Dendritic cell treated with granulocyte-macrophage colony-stimulating factor and Interleukin-4, amounts not matched to agents 40 ng/mL and 50 ng/mL, for 4 days (primary cell): ENCODE measurements at regions of chr19 and their contacts with region 1.

Region 1: GRCh38 chr19:572140-572742 is at the start of gene BSG:
- H3K4me3 Mint-ChIP-seq: peak within 1 kb of the TSS; percentile 90
- H3K27ac Mint-ChIP-seq: peak within 1 kb of the TSS; percentile 95
- H3K4me1 Mint-ChIP-seq: peaks cover 61% of the 10 kb centered on the region
- H3K27me3 Mint-ChIP-seq: no peaks in the 10 kb centered on the region

Region 2: GRCh38 chr19:531009-531752 is 41.1 kb before region 1 on chr19:
- intact Hi-C with region 1: loop called (anchors 5 kb)
- H3K4me3 Mint-ChIP-seq: peak overlapping the region; percentile 92
- H3K27ac Mint-ChIP-seq: peak overlapping the region; percentile 82
- H3K4me1 Mint-ChIP-seq: peaks cover 46% of the 10 kb centered on the region
- H3K27me3 Mint-ChIP-seq: peaks cover 12% of the 10 kb centered on the region

Region 3: GRCh38 chr19:556611-557382 is 15.4 kb before region 1 on chr19:
- intact Hi-C with region 1: loop called (anchors 2 kb)
- H3K4me3 Mint-ChIP-seq: peak overlapping the region; percentile 61
- H3K27ac Mint-ChIP-seq: peak overlapping the region; percentile 87
- H3K4me1 Mint-ChIP-seq: peaks cover 37% of the 10 kb centered on the region
- H3K27me3 Mint-ChIP-seq: peaks cover 1% of the 10 kb centered on the region